Gastrocnemius medialis (tissue), 4 donors: ENCODE measurements at regions of chr2 and their contacts with region 1.

Region 1: DNA sequence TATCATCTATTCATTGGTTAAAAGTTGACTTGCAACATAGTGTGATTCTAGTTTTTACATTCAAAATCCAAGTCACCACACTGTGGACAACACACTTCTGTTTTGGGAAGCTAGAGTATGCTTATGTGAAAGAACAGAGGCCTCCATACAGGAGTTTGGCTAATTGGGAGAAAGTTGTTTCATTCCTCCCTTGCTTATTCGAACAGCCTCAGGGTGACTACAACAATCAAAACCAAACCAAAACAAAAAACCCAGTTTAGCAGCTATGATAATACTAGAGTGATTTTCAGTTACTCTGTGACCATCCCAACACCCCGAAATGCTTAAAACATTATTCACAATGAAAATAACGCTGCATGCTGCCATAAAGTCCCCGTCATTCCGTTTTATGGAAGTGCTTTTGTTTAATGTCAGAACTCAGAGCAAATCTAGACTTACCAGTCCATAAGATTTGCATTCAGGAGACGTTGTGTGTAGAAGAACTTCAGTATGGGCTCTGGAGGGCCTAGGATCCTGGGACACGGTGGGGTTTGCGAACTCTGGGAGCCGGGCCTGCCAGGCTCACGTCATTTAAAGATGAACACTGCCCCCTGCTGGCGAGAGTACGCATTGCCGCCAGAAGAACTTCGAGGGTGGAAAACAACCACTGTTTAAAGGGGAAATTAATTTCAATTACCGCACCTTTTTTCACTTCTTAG is 111.4 kb downstream of the FTCDNL1 start:
- DNase-seq: peak in 1 of 2 donors; percentile 30
- ATAC-seq: no peak
- H3K4me3 ChIP-seq: peak overlapping the region in 1 of 4 donors; percentile 3
- H3K27ac ChIP-seq: no peak overlapping the region
- H3K4me1 ChIP-seq: no peaks in the 10 kb centered on the region
- H3K27me3 ChIP-seq: no peaks in the 10 kb centered on the region
- CTCF ChIP-seq: peak; percentile 64 to 91 (median 80)
- POLR2A ChIP-seq: no peak

Region 2: DNA sequence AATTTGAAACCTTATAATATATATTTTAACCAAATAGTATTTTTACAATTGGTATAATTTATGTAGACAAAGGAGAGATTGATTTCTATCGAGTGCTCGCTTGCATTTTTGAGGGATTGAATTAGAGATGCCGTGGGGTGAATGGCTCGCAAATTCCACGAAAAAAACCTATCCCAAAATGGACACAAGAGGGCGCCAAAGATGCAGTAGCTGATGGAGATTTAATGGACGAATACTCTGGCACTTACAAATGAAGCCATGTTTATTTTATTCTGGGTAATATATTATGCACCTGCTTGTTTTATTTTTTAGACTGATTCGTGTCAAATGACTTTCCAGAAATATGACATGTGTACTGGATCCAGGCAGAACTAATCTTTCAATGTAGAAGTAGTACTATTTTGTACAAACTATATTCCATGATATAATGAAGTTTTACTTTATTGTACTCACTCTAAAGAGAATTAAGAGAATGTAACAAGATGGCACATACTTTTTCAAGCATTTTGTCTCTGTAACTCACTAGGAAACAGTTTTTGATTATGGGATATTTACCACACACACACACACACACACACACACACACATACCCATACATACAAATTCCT is 1429.8 kb before region 1 on chr2:
- in situ Hi-C with region 1: loop called (anchors 10 to 25 kb)
- intact Hi-C with region 1: loop called (anchors 5 kb)
- DNase-seq: no peak
- ATAC-seq: peak in 1 of 2 donors; percentile 44
- H3K4me3 ChIP-seq: no peak overlapping the region
- H3K27ac ChIP-seq: no peak overlapping the region
- H3K4me1 ChIP-seq: no peaks in the 10 kb centered on the region
- H3K27me3 ChIP-seq: no peaks in the 10 kb centered on the region
- CTCF ChIP-seq: peak in 4 of 5 experiments; percentile 38 to 79 (median 64)
- POLR2A ChIP-seq: no peak

Region 3: DNA sequence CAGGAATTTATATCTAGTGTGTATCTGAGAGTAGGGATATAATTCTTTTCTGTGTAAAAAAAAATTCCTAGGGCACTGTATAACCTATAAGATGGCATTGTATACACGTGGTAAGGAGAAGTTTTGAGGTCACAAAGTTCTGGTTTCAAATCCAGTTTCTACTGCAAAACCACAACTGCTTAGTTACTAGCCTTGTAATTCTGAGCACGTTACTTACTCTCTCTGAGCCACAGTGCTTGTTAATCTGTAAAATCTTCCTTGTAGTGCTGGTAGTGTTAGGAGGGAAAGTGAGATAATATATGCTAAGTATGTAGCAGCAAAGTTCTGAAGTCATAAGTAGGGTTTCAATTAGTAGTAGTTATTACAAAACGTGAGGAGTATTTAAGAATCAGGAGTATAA is 457.3 kb before region 1 on chr2:
- in situ Hi-C with region 1: no loop called
- intact Hi-C with region 1: no loop called
- DNase-seq: no peak
- ATAC-seq: no peak
- H3K4me3 ChIP-seq: no peak overlapping the region
- H3K27ac ChIP-seq: no peak overlapping the region
- H3K4me1 ChIP-seq: no peaks in the 10 kb centered on the region
- H3K27me3 ChIP-seq: no peaks in the 10 kb centered on the region
- CTCF ChIP-seq: no peak
- POLR2A ChIP-seq: no peak

Region 4: GRCh38 chr2:199366406-199366805 is 373.2 kb before region 1 on chr2:
- in situ Hi-C with region 1: no loop called
- intact Hi-C with region 1: no loop called
- DNase-seq: no peak
- ATAC-seq: no peak
- H3K4me3 ChIP-seq: no peak overlapping the region
- H3K27ac ChIP-seq: no peak overlapping the region
- H3K4me1 ChIP-seq: no peaks in the 10 kb centered on the region
- H3K27me3 ChIP-seq: no peaks in the 10 kb centered on the region
- CTCF ChIP-seq: no peak
- POLR2A ChIP-seq: no peak

Region 5: GRCh38 chr2:199704358-199705238 is 35.0 kb before region 1 on chr2:
- in situ Hi-C with region 1: no loop called
- intact Hi-C with region 1: loop called (anchors 2 kb)
- DNase-seq: no peak
- ATAC-seq: peak; percentile 63 to 69
- H3K4me3 ChIP-seq: no peak overlapping the region
- H3K27ac ChIP-seq: no peak overlapping the region
- H3K4me1 ChIP-seq: no peaks in the 10 kb centered on the region
- H3K27me3 ChIP-seq: no peaks in the 10 kb centered on the region
- CTCF ChIP-seq: peak; percentile 16 to 59 (median 39)
- POLR2A ChIP-seq: no peak